ENCODE measurements at regions of chr6 and their contacts with region 1.

Region 1: GRCh38 chr6:156942266-156942665 is 165.1 kb downstream of the ARID1B start:
- DNase-seq: no peak
- H3K4me3 ChIP-seq: no peak overlapping the region
- CTCF ChIP-seq: no peak

Region 2: DNA sequence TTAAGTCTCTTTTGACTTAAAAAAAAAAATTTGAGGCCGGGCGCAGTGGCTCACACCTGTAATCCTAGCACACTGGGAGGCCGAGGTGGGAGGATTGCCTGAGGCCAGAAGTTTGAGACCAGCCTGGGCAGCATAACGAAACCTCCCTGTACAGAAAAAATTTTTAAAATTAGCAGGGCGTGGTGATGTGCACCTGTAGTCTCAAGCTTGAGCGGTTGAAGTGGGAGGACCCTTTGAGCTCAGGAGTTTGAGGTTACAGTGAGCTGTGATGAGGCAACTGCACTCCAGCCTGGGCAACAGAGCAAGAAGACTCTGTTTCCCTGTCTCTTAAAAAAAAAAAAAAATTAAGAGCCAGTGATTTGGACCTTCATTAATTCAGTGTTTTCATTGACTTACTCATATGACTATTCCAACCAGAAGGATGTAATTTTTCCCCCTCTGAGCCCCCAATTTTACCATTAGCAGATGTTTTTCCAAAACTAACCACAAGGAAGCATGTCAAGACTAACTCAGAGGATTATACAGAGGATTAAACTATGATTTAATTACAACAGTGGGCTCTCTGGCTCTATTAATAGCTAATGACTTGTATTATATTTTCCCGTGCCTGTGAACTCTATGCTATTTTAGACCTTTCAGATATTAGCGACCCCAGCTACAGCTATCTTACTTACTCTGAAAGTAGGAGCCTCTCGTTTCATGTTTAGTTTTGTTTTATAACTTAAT is 90.0 kb before region 1 on chr6:
- CTCF ChIA-PET with region 1: no interaction called
- POLR2A ChIA-PET with region 1: no interaction called
- DNase-seq: no peak
- H3K4me3 ChIP-seq: no peak overlapping the region
- CTCF ChIP-seq: no peak

Region 3: DNA sequence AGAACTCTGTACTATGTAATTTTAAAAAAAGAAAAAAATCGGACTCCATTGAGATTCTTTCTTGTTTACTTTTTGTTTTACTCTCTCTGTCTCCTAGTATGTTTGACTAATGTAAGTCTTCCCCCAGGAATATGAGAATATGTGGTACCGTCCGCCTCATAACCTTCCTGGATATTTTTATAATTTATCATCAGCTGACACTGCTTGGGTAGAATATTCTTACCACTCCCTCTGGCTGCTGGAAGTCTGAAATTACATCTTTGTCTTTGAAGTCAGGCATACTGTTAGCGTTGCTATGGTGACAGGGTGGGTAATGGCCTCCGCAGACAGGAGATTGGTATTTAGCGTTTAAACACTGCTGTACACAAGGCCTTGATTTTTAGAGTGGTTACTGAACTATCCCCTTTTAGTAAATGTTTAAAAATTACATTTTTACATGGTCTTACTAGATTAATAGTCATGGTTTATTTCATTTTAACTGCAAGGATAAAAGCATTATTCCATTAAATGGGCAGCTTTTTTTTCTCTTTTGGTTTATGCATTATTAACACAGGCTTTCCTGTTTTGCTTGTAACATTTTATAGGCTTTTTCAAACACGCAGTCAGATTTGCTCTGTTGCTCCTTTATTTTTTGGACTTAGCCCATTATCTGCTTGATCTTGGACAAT is 11.3 kb after region 1 on chr6:
- CTCF ChIA-PET with region 1: interaction called, 21 read pairs
- POLR2A ChIA-PET with region 1: interaction called, 5 read pairs
- DNase-seq: peak; percentile 94
- H3K4me3 ChIP-seq: peak overlapping the region; percentile 22
- CTCF ChIP-seq: peak; percentile 16

Measured in AG04449 (cell line).